MCF 10A (cell line): ENCODE measurements at regions of chr16 and their contacts with region 1.

Region 1: GRCh38 chr16:21263640-21264570 is 14.2 kb downstream of the CRYM start:
- DNase-seq: no peak
- H3K4me3 Mint-ChIP-seq: no peak overlapping the region
- H3K27ac Mint-ChIP-seq: no peak overlapping the region
- H3K4me1 Mint-ChIP-seq: peaks cover 6% of the 10 kb centered on the region
- H3K27me3 Mint-ChIP-seq: peaks cover 7% of the 10 kb centered on the region
- CTCF ChIP-seq: no peak

Region 2: DNA sequence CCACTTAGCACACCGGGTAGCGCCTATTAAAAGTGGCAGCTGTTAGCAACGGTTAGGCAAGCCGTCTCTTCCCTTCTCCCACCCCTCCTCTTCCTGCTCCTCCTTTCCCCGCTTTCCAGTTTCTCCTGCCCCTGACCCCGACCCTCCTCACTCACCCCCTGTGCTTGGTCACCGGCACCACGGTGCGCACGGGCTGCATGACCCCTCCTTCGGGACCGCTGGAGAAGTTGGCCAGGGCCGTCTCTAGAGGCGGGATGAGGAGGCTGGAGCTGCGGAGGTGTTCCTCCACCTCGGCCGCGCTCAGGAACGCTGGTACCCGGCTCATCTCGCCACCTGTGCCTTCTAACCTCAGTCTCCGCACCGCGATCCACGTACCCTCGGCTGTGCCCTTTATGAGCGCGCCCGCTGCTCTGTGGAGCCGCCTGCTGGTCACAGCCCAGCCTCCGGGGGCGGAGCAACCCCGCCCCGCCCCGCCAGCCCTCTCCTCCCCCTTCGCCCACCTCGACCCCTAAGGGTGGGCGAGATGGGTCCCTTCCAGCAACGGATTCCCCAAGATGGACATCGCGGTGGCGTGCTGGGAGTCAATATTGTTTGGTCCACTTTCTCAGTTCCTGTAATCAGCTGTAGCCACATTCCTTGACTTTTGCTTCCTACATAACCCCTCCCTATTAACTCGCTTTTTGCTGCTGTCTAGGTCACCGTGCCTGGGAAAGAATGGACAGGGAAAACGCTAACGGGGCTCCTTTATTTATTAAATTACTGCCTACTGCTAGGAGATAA is 14.2 kb after region 1 on chr16 and contains the start of gene CRYM:
- CTCF ChIA-PET with region 1: interaction called, 23 read pairs
- POLR2A ChIA-PET with region 1: interaction called, 4 read pairs
- intact Hi-C with region 1: no loop called
- DNase-seq: no peak
- H3K4me3 Mint-ChIP-seq: peak within 1 kb of the TSS; percentile 67
- H3K27ac Mint-ChIP-seq: no peak within 1 kb of the TSS
- H3K4me1 Mint-ChIP-seq: no peaks in the 10 kb centered on the region
- H3K27me3 Mint-ChIP-seq: peaks cover 63% of the 10 kb centered on the region
- CTCF ChIP-seq: peak; percentile 85
- total RNA-seq, gene CRYM: 1.6 and 4.0 TPM in 2 replicates